CD8-positive, alpha-beta T cell (primary cell): ENCODE measurements at regions of chr7 and their contacts with region 1.

Region 1: GRCh38 chr7:134646425-134647305 is at the start of gene BPGM:
- DNase-seq: peak; percentile 93 to 100 (median 96)
- ATAC-seq: peak; percentile 92
- H3K4me3 ChIP-seq: peak within 1 kb of the TSS; percentile 69 to 81
- H3K4me3 Mint-ChIP-seq: no peak within 1 kb of the TSS
- H3K27ac ChIP-seq: peak within 1 kb of the TSS; percentile 84 to 89
- H3K27ac Mint-ChIP-seq: no peak within 1 kb of the TSS
- H3K4me1 ChIP-seq: peaks cover 22% of the 10 kb centered on the region
- H3K4me1 Mint-ChIP-seq: peaks cover 28% of the 10 kb centered on the region
- H3K27me3 ChIP-seq: no peaks in the 10 kb centered on the region
- H3K27me3 Mint-ChIP-seq: no peaks in the 10 kb centered on the region
- CTCF ChIP-seq: peak; percentile 26
- total RNA-seq, gene BPGM: 30.3 to 31.4 TPM

Region 2: DNA sequence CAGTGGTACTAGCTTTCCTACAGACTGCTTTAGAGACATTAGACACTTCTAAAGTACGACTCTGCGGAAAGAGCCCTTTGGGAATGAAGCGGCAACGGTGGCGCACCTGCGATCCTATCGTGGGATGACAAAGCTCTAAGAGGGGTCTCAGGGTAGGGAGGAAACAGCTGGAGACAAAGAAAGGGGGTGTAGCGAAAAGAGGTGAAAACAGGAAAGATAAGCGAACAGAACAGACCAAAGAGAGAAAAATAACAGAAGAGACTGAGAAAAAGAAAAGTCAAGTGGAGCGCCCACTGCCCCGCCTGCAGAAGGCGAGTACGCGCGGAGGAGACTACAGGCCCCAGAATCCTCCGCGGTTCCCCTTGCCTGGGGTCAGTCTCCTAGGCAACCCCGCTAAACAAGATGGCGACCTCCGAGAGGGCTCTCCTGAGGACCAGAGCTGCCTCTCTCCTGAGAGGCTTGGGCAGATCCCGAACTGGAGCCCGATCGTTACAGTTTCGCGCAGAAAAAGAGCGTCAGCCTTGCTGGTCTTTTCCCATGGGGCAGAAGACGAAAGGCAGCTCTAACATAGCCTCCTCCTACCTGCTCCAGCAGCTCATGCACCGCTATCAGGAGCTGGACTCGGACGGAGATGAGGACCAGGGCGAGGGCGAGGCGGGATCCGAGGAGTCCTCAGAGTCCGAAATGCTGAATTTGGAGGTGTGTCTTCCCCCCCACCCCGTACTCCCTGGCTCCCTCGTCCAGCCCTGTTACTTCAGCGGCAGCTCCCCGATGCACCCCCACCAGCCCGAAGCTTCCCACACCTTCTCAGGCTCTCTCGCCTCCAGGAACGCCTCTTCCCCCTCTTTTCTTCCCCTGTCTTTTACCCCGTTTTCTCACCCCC is 519.5 kb before region 1 on chr7 and contains the start of gene LRGUK:
- CTCF ChIA-PET with region 1: no interaction called
- POLR2A ChIA-PET with region 1: no interaction called
- intact Hi-C with region 1: loop called in 1 of 2 experiments (anchors 2 kb)
- DNase-seq: peak; percentile 59 to 88 (median 79)
- ATAC-seq: peak; percentile 100
- H3K4me3 ChIP-seq: peak within 1 kb of the TSS; percentile 61 to 76
- H3K4me3 Mint-ChIP-seq: peak within 1 kb of the TSS; percentile 85
- H3K27ac ChIP-seq: no peak within 1 kb of the TSS
- H3K27ac Mint-ChIP-seq: no peak within 1 kb of the TSS
- H3K4me1 ChIP-seq: peaks cover 10% of the 10 kb centered on the region
- H3K4me1 Mint-ChIP-seq: peaks cover 15% of the 10 kb centered on the region
- H3K27me3 ChIP-seq: peaks cover 0 to 4% of the 10 kb centered on the region in 2 experiments
- H3K27me3 Mint-ChIP-seq: peaks cover 18% of the 10 kb centered on the region
- CTCF ChIP-seq: no peak
- total RNA-seq, gene LRGUK: 0.42 to 0.71 TPM

Region 3: DNA sequence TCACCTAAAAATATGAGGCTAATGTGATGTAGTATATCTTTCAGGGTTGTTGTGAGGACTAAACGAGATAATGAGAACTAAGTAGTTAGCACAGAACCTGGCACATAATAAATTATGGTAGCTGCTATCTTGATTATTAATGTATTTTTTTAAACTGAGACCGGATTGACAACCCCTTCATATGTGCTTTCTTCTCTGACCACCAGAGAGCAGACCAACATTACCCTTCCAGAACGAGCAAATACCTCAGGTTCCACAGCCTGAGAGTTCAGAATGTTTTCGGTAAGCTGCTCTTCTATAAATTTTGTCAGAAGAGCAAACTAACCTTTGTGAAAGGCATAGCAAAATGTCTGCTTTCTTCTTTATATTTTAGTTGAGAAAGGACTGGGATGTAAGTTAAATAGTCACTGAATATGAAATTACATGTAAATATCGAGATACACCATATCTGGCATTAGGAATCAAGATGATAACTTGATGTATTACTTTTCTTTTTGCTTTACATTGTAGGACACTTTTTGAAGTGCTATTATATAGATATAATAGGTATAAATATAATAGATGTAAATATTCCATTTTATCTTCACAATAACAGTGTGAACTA is 13.6 kb before region 1 on chr7:
- CTCF ChIA-PET with region 1: interaction called, 78 read pairs
- POLR2A ChIA-PET with region 1: interaction called, 7 read pairs
- intact Hi-C with region 1: no loop called
- DNase-seq: peak in 6 of 9 experiments; percentile 26 to 81 (median 46)
- ATAC-seq: peak; percentile 96
- H3K4me3 ChIP-seq: no peak overlapping the region
- H3K4me3 Mint-ChIP-seq: no peak overlapping the region
- H3K27ac ChIP-seq: no peak overlapping the region
- H3K27ac Mint-ChIP-seq: no peak overlapping the region
- H3K4me1 ChIP-seq: peaks cover 6% of the 10 kb centered on the region
- H3K4me1 Mint-ChIP-seq: peaks cover 18% of the 10 kb centered on the region
- H3K27me3 ChIP-seq: peaks cover 0 to 3% of the 10 kb centered on the region in 2 experiments
- H3K27me3 Mint-ChIP-seq: peaks cover 12% of the 10 kb centered on the region
- CTCF ChIP-seq: peak; percentile 72

Region 4: DNA sequence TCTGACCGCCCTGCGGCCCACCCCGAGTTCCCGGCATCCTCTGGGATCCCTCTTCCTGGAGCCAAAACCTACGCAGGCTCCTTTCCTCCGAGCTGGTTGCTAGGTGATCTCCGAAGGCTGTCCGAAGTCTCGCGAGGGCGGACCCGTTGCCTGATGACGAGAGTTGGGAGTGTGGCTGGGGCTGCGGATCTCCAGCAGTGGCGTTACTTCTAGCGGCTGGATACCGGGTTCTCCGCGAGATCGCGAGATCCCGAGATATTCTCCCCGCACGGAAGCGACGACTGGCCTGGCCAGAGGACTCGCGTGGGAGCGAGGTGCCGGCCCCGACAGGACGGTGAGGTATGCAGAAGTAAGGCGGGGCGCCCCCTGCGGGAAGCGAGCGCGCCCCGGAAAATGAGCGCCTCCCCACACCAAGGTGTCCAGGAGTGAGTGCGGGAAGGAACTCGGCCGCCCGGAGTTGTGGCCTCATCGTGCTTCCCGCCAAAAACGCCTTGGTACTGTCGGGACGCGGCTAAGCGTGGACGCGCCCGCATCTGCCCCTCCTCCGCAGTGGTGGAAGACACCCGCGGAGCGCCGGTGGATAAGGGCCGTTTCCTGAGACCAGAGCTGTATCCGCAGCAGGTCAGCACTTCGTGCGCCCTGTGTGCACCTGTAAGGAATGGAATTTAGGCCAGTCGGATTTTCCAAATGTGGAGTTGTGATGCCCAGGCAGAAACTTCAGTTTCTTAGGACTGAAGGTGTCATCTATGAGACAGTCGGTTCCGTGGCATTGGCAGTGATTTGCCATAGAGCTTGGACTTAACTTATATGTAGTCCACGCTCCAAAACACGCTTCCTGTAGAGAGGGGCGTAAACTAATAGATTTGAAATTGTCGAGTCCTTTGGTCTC is 339.9 kb after region 1 on chr7 and contains the start of gene AGBL3:
- CTCF ChIA-PET with region 1: interaction called, 5 read pairs
- POLR2A ChIA-PET with region 1: interaction called, 6 read pairs
- intact Hi-C with region 1: loop called in 1 of 2 experiments (anchors 1 kb)
- DNase-seq: peak; percentile 78 to 94 (median 89)
- ATAC-seq: peak; percentile 87
- H3K4me3 ChIP-seq: peak within 1 kb of the TSS; percentile 73 to 83
- H3K4me3 Mint-ChIP-seq: peak within 1 kb of the TSS; percentile 98
- H3K27ac ChIP-seq: peak within 1 kb of the TSS; percentile 90 to 99
- H3K27ac Mint-ChIP-seq: peak within 1 kb of the TSS; percentile 99
- H3K4me1 ChIP-seq: peaks cover 35% of the 10 kb centered on the region
- H3K4me1 Mint-ChIP-seq: peaks cover 42% of the 10 kb centered on the region
- H3K27me3 ChIP-seq: no peaks in the 10 kb centered on the region
- H3K27me3 Mint-ChIP-seq: no peaks in the 10 kb centered on the region
- CTCF ChIP-seq: peak; percentile 68
- total RNA-seq, gene AGBL3: 2.7 to 2.8 TPM

Region 5: DNA sequence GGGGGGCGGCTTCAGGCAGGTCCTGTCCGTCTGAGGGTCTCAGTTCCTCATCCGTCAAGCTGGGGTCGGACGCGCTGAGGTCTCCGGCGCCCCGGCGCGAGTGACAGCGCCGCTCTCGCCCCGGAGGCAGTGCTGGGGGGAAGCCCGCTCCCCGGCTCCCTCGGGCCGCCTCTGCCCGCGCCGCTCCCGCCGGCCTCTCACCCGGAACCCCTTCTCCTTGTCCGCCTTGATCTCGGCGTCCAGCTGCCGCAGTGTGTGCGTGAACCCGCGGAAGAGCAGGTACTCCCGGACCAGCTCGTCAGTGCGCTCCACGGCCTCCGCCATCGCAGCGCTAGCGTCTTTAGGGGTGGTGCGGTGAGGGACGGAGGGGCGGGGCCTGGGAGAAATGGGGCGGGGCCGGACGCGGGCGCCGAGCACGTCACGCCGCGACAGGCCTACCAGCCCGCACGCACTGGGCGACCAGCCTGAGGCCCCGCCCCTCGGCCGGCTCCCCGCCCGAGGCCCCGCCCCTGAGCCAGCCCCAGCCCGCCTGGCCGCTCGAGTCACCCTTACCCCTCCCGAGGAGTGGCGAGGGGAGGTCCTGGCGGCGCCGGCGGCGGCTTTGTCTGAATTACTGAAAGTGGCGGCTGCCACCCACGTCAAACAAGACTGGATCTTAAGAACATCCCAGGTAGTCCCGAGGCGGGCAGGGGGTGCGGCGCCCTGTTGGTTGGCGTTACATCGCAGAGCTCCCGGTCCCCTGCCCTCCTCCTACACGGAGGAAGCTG is 564.7 kb after region 1 on chr7 and contains the start of gene WDR91:
- CTCF ChIA-PET with region 1: interaction called, 3 read pairs
- POLR2A ChIA-PET with region 1: interaction called, 9 read pairs
- intact Hi-C with region 1: loop called (anchors 1 to 5 kb)
- DNase-seq: peak; percentile 95 to 98 (median 96)
- ATAC-seq: peak; percentile 93
- H3K4me3 ChIP-seq: peak within 1 kb of the TSS; percentile 74 to 91
- H3K4me3 Mint-ChIP-seq: peak within 1 kb of the TSS; percentile 97
- H3K27ac ChIP-seq: peak within 1 kb of the TSS; percentile 80 to 91
- H3K27ac Mint-ChIP-seq: peak within 1 kb of the TSS; percentile 99
- H3K4me1 ChIP-seq: peaks cover 12% of the 10 kb centered on the region
- H3K4me1 Mint-ChIP-seq: peaks cover 42% of the 10 kb centered on the region
- H3K27me3 ChIP-seq: no peaks in the 10 kb centered on the region
- H3K27me3 Mint-ChIP-seq: no peaks in the 10 kb centered on the region
- CTCF ChIP-seq: no peak
- total RNA-seq, gene WDR91: 43.3 to 46.6 TPM

Region 6: DNA sequence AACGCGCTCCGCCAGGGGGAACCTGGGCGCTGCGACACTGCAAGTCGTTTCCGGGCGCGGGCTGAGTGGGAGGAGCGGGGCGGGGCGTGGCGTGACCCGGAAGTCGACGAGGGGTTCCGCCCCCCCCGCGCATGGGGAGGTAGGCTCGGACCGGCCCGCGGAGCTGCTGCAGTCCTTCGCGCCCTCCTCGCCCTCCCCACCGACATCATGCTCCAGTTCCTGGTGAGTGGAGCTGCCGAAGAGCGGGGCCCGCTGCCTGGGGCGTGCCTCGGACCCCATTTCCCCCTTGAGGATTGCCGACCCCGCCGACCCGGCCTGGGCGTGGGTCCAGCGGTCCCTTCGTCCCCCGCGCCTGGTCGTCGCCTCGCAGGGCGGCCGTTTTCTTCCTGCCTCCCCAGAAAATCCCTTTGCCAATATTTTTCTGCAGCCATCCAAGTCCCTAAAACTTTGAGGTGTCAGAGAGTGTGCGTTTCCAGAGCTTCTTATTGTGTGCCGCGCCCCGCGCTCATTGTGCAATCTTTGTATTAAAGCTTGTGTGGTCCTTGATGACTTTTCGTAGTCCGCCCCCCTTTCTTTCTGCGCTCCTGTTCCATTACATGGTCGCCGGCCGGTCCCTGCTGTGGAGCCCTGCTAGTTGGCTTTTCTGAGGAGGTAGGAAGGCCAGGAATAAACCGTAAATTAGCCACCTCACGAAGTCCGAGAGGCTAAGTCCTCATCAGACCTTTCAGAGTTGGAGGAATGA is 1015.9 kb after region 1 on chr7 and contains the start of gene STMP1:
- CTCF ChIA-PET with region 1: no interaction called
- POLR2A ChIA-PET with region 1: no interaction called
- intact Hi-C with region 1: loop called in 1 of 2 experiments (anchors 1 kb)
- DNase-seq: peak; percentile 91 to 99 (median 96)
- ATAC-seq: peak; percentile 99
- H3K4me3 ChIP-seq: peak within 1 kb of the TSS; percentile 72 to 76
- H3K4me3 Mint-ChIP-seq: peak within 1 kb of the TSS; percentile 90
- H3K27ac ChIP-seq: peak within 1 kb of the TSS; percentile 53 to 65
- H3K27ac Mint-ChIP-seq: peak within 1 kb of the TSS; percentile 88
- H3K4me1 ChIP-seq: peaks cover 20% of the 10 kb centered on the region
- H3K4me1 Mint-ChIP-seq: peaks cover 41% of the 10 kb centered on the region
- H3K27me3 ChIP-seq: no peaks in the 10 kb centered on the region
- H3K27me3 Mint-ChIP-seq: no peaks in the 10 kb centered on the region
- CTCF ChIP-seq: peak; percentile 64
- total RNA-seq, gene STMP1: 9.4 to 11.5 TPM